GM18951 (cell line): ENCODE measurements at regions of chr17 and their contacts with region 1.

Region 1: GRCh38 chr17:59435238-59435637 is 103.8 kb downstream of the YPEL2 start:
- POLR2A ChIP-seq: no peak

Region 2: GRCh38 chr17:59329638-59330313 is 105.5 kb before region 1 on chr17:
- in situ Hi-C with region 1: loop called (anchors 5 kb)
- POLR2A ChIP-seq: no peak